ENCODE measurements at regions of chr15 and their contacts with region 1.

Region 1: DNA sequence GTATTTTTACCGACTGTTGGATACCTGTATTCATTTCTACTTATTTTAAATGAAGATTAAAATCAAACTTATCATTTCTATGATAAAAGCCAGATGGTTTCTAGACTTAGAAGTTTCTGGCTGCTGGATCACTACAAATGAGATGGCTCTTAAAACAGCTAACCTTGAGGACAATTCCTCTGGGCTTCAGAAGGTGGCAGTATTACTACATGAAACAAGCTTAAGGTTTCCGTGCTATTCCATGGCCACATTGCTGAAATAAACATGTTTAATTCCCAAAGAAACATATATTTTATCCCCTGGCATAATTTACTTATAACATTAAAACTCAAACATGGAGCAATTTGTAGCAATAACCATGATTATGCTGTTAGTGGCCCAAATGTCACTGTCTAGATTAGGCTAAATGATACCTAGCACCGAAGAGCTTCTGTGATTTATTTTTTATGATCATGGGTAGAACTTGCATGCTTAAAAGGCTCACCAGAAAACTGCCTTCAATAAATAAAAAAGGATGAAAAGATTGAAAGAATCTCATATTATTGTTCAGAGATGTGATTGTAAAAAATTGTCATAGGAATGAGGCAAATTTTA is 204.0 kb upstream of the NANOGP8 start:
- DNase-seq: peak; percentile 21
- CTCF ChIP-seq: peak; percentile 70

Region 2: DNA sequence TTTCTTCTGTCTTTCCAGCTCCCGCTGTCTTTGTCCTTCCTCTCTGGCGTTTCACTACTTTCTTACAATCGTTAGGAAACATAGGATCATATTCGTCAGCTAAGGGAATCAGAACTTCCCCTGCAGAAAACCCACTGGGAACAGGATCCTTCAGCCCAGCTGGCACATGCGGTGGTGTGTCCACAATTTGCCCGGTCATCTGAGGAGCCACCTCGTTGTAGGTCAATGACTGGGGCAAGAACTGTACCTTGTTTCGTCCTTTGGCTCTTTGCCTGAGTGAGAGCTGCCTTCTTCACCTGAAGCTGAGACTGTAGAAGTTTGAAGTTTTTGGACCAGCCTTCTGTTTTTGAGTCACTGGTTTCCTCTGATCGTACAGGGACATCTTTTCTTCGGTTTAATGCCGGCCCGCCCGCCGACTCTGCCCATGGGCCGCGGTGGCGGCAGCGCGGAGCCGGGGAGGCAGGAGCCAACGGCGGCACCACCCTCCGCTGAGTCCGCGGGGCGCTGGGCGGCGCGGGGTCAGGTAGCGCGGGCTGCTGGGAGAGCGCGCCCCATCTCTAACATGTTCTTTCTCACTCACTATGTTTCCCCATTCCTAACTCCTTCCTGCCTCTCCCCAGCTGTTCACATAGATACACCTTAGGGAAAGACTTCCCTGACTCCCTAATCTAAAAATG is 10.1 kb after region 1 on chr15:
- CTCF ChIA-PET with region 1: interaction called, 13 read pairs
- POLR2A ChIA-PET with region 1: no interaction called
- DNase-seq: no peak
- CTCF ChIP-seq: no peak

Measured in GM10248 (cell line).